Right ventricle myocardium inferior (tissue), 1 donor: ENCODE measurements at regions of chr3 and their contacts with region 1.

Region 1: DNA sequence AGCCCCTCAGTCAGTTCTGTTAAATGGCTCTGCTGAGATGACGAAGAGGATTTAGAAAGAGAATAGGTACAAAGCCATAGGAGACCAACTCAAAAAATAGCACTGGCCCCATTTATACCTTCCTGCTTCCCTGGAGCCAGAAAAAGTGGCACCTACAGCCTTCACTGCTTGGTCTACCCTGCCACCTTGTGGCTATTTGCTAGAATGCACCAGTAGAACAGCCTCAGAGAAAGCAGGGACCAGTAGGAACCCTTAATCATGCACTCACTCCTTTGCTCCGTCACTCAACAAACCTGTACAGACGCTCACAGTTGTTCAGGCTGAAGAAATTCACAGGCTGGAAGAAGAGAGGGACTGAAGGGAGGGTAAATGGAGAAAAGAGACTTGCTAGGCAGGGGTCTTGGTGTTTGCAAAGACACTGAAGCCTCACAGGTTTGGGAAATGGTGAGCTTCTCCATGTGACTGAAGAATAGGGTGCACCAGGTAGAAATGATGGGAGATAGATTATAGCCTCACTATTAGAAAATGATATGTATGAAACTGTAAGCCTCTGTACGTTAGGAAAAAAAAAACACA is 12.1 kb upstream of the RTP2 start:
- DNase-seq: no peak
- ATAC-seq: peak; percentile 86

Region 2: GRCh38 chr3:187227658-187228258 is 486.7 kb before region 1 on chr3:
- intact Hi-C with region 1: loop called (anchors 10 kb)
- DNase-seq: no peak
- ATAC-seq: no peak

Region 3: GRCh38 chr3:187319699-187320302 is 394.7 kb before region 1 on chr3:
- intact Hi-C with region 1: loop called (anchors 1 kb)
- DNase-seq: no peak
- ATAC-seq: peak; percentile 95

Region 4: GRCh38 chr3:187616307-187616972 is 98.1 kb before region 1 on chr3:
- intact Hi-C with region 1: loop called (anchors 10 kb)
- DNase-seq: peak; percentile 68
- ATAC-seq: no peak